GM12878 (cell line): ENCODE measurements at regions of chr13 and their contacts with region 1.

Region 1: DNA sequence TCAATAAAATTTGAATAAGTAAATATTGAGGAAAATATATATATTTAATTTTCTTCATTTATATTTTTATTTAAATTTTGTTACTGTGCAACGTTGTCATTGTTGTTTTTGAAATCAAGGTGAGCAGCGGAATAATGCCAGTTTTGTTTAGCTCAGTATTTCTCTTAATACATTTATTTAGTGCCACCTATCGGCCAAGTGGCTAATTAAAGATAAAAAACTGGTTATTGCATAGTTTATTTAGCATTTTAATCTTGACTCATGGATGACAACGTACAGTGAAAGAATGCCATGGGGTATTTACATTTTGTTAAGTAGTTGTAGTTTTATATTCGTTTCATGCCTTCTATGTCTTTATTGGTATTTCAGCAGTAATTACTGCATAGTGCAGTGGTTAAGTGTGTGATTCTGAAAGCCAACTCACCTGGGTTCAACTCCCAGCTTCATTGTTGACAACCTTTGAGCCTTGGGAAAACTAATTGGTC is 265.9 kb downstream of the MYO16 start:
- DNase-seq: no peak
- ATAC-seq: peak; percentile 71
- H3K4me3 ChIP-seq: no peak overlapping the region
- H3K27ac ChIP-seq: no peak overlapping the region
- H3K4me1 ChIP-seq: no peaks in the 10 kb centered on the region
- H3K27me3 ChIP-seq: no peaks in the 10 kb centered on the region
- CTCF ChIP-seq: peak; percentile 20 to 61 (median 37); a peak in 5 of 6 replicates
- EP300 ChIP-seq: no peak
- POLR2A ChIP-seq: no peak
- RAD21 ChIP-seq: peak; percentile 59

Region 2: DNA sequence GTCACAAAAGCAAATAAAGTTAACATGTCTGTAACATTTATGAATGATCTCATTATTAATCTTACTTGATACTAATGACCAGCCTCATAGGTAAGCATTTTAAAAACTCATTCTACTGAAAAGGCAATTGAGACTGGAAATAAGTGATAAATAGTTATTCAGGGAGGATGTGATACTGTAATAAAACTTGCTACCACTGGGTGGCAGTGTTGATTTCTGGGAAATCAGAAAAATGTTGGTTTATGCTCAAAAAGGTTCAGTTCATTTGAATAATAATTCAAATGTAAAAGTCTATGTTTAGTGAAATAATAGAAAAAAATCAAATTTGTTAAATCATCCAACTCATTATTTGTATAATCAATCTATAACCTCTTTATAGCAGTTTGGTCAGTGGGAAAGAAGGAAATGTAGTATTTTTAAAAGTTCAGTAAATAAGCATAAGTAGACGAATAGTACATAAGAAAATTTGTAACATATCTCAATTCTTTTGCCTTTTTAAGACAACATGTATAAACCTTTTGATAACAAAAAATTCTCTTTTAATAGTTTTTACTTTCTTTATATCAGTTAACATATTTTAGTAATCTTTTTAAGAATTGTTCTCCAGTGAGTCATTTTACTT is 667.5 kb before region 1 on chr13:
- CTCF ChIA-PET with region 1: interaction called, 7 read pairs
- POLR2A ChIA-PET with region 1: no interaction called
- RAD21 ChIA-PET with region 1: interaction called, 3 read pairs
- SMC1A ChIA-PET with region 1: interaction called, 5 read pairs
- in situ Hi-C with region 1: no loop called
- intact Hi-C with region 1: loop called (anchors 5 kb)
- DNase-seq: no peak
- ATAC-seq: peak; percentile 18; the same call in 1 of the 3 replicates
- H3K4me3 ChIP-seq: no peak overlapping the region
- H3K27ac ChIP-seq: no peak overlapping the region
- H3K4me1 ChIP-seq: peaks cover 7% of the 10 kb centered on the region
- H3K27me3 ChIP-seq: no peaks in the 10 kb centered on the region
- CTCF ChIP-seq: peak; percentile 58 to 60 (median 58); a peak in 5 of 6 replicates
- EP300 ChIP-seq: no peak
- POLR2A ChIP-seq: no peak
- RAD21 ChIP-seq: peak; percentile 76

Region 3: GRCh38 chr13:108342369-108343289 is 552.6 kb before region 1 on chr13:
- CTCF ChIA-PET with region 1: interaction called, 13 read pairs
- POLR2A ChIA-PET with region 1: no interaction called
- RAD21 ChIA-PET with region 1: interaction called, 20 read pairs
- SMC1A ChIA-PET with region 1: interaction called, 28 read pairs
- in situ Hi-C with region 1: no loop called
- intact Hi-C with region 1: loop called (anchors 1 kb)
- DNase-seq: peak; percentile 3
- ATAC-seq: peak; percentile 82
- H3K4me3 ChIP-seq: no peak overlapping the region
- H3K27ac ChIP-seq: no peak overlapping the region
- H3K4me1 ChIP-seq: no peaks in the 10 kb centered on the region; the same call in 1 of the 2 replicates
- H3K27me3 ChIP-seq: peaks cover 0 to 2% of the 10 kb centered on the region in 2 experiments; a peak in 1 of 4 replicates
- CTCF ChIP-seq: peak; percentile 33 to 56 (median 48); a peak in 5 of 6 replicates
- EP300 ChIP-seq: no peak
- POLR2A ChIP-seq: no peak
- RAD21 ChIP-seq: peak; percentile 30; the same call in 1 of the 2 replicates

Region 4: GRCh38 chr13:108609353-108609752 is 285.9 kb before region 1 on chr13:
- CTCF ChIA-PET with region 1: interaction called, 41 read pairs
- POLR2A ChIA-PET with region 1: no interaction called
- RAD21 ChIA-PET with region 1: interaction called, 16 read pairs
- SMC1A ChIA-PET with region 1: interaction called, 17 read pairs
- in situ Hi-C with region 1: no loop called
- intact Hi-C with region 1: loop called (anchors 1 kb)
- DNase-seq: no peak
- ATAC-seq: peak; percentile 75
- H3K4me3 ChIP-seq: no peak overlapping the region
- H3K27ac ChIP-seq: no peak overlapping the region
- H3K4me1 ChIP-seq: no peaks in the 10 kb centered on the region
- H3K27me3 ChIP-seq: no peaks in the 10 kb centered on the region
- CTCF ChIP-seq: peak; percentile 25 to 47 (median 35); a peak in 4 of 6 replicates
- EP300 ChIP-seq: no peak
- POLR2A ChIP-seq: no peak
- RAD21 ChIP-seq: no peak; the same call in 1 of the 2 replicates

Region 5: DNA sequence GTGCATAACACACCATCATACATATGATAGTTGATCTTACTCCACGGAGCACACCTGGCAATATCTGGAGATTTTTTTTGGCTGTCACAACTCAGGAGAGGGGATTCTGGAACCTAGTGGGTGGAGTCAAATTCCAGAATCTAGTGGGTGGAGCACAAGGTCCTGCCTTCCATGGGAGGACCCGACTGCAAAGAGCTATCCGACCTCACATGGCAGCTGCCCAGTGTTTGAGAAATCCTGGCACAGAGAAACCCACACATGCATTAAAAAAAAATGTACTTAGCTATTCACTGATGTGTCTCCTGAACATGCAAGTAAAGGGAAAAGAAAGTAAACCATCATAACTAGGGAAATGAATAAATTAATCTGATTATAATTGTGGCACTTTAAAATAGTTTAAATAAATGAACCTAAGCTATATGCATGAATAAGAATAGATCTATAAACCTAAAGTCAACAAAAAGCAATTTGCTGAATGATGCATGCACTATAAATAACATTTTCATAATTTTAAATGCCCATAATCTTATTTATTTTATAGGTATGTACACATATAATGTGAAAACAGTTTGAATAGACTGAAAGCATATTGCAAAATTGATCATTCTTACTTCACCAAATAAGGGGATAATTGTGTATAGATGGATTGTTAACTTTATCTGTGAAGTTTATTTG is 34.4 kb after region 1 on chr13:
- CTCF ChIA-PET with region 1: no interaction called
- POLR2A ChIA-PET with region 1: no interaction called
- RAD21 ChIA-PET with region 1: no interaction called
- SMC1A ChIA-PET with region 1: no interaction called
- in situ Hi-C with region 1: no loop called
- intact Hi-C with region 1: no loop called
- DNase-seq: no peak
- ATAC-seq: no peak
- H3K4me3 ChIP-seq: no peak overlapping the region
- H3K27ac ChIP-seq: no peak overlapping the region
- H3K4me1 ChIP-seq: no peaks in the 10 kb centered on the region
- H3K27me3 ChIP-seq: no peaks in the 10 kb centered on the region
- CTCF ChIP-seq: no peak
- EP300 ChIP-seq: no peak
- POLR2A ChIP-seq: no peak
- RAD21 ChIP-seq: no peak